K562 (cell line): ENCODE measurements at regions of chr2 and their contacts with region 1.

Region 1: GRCh38 chr2:64888591-64889309 is 100.4 kb upstream of the SLC1A4 start:
- DNase-seq: peak in 2 of 4 experiments; percentile 26 to 31
- ATAC-seq: peak; percentile 62; the same call in 1 of the 3 replicates
- H3K4me3 ChIP-seq: no peak overlapping the region
- H3K27ac ChIP-seq: no peak overlapping the region
- H3K4me1 ChIP-seq: no peaks in the 10 kb centered on the region
- H3K27me3 ChIP-seq: peaks cover 0 to 13% of the 10 kb centered on the region in 2 experiments; a peak in 3 of 5 replicates
- CTCF ChIP-seq: peak; percentile 36 to 52 (median 43); a peak in 5 of 6 replicates
- EP300 ChIP-seq: no peak
- POLR2A ChIP-seq: no peak
- RAD21 ChIP-seq: peak in 1 of 2 experiments; percentile 54; a peak in 2 of 4 replicates

Region 2: GRCh38 chr2:63424329-63425078 is 1464.2 kb before region 1 on chr2:
- CTCF ChIA-PET with region 1: no interaction called
- POLR2A ChIA-PET with region 1: no interaction called
- in situ Hi-C with region 1: no loop called
- intact Hi-C with region 1: no loop called
- DNase-seq: peak; percentile 52 to 67 (median 55)
- ATAC-seq: peak; percentile 94
- H3K4me3 ChIP-seq: no peak overlapping the region
- H3K27ac ChIP-seq: no peak overlapping the region
- H3K4me1 ChIP-seq: peaks cover 2 to 5% of the 10 kb centered on the region in 2 experiments; a peak in 1 of 5 replicates
- H3K27me3 ChIP-seq: no peaks in the 10 kb centered on the region
- CTCF ChIP-seq: peak; percentile 61 to 83 (median 80)
- EP300 ChIP-seq: no peak
- POLR2A ChIP-seq: no peak
- RAD21 ChIP-seq: peak; percentile 43 to 78

Region 3: GRCh38 chr2:64062829-64063228 is 825.9 kb before region 1 on chr2:
- CTCF ChIA-PET with region 1: no interaction called
- POLR2A ChIA-PET with region 1: no interaction called
- in situ Hi-C with region 1: loop called (anchors 10 kb)
- intact Hi-C with region 1: no loop called
- DNase-seq: no peak
- ATAC-seq: no peak
- H3K4me3 ChIP-seq: no peak overlapping the region
- H3K27ac ChIP-seq: no peak overlapping the region
- H3K4me1 ChIP-seq: peaks cover 0 to 14% of the 10 kb centered on the region in 2 experiments; a peak in 3 of 5 replicates
- H3K27me3 ChIP-seq: no peaks in the 10 kb centered on the region
- CTCF ChIP-seq: no peak
- EP300 ChIP-seq: no peak
- POLR2A ChIP-seq: no peak
- RAD21 ChIP-seq: no peak